ENCODE measurements at regions of chr14 and their contacts with region 1.

Region 1: DNA sequence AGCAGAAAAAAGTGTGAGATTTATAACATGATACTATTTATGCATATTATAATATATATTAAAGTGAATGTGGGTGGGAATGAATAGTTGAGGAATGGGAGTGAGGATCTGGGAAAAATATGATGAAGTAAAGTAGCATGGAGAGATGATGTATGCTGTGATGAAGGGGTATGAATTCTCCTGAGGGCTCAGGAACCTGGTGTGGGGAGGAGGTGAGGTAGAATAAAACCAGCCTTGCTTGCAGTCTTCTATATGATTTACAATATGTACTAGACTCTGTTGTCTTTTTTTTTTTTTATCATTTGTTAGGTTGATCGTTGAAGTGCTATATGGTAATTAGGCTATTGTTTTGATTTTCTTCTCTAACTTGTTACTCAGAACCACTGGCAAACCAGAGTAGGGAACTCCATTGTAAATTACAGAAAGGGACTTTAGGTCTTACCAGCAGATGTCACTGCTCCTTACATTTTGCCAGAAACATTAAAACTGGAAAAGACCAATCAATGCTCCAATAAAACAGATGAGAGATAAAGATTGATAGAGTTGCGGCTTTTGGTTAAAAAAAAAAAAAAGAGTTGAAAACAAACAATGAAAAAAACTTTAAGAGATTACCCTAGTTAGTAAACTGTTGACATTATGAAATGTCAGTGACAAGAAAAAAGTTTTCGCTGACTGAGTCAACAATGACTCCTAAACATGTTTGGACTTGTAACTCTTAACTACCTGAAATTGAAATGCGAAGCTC is 39.9 kb downstream of the ATL1 start:
- DNase-seq: peak in 1 of 4 donors; percentile 45
- ATAC-seq: peak; percentile 85
- H3K4me3 ChIP-seq: no peak overlapping the region
- H3K27ac ChIP-seq: no peak overlapping the region
- H3K4me1 ChIP-seq: no peaks in the 10 kb centered on the region
- H3K27me3 ChIP-seq: no peaks in the 10 kb centered on the region
- CTCF ChIP-seq: peak in 1 of 2 donors; percentile 49

Region 2: GRCh38 chr14:50773632-50774541 is 174.0 kb after region 1 on chr14:
- intact Hi-C with region 1: loop called in 1 of 2 experiments (anchors 10 kb)
- DNase-seq: peak in 1 of 4 donors; percentile 20
- ATAC-seq: peak; percentile 86
- H3K4me3 ChIP-seq: no peak overlapping the region
- H3K27ac ChIP-seq: no peak overlapping the region
- H3K4me1 ChIP-seq: peaks cover 0 to 12% of the 10 kb centered on the region in 2 donors
- H3K27me3 ChIP-seq: no peaks in the 10 kb centered on the region
- CTCF ChIP-seq: peak; percentile 50 to 58

Measured in left lung (tissue), 14 donors.